Activated CD4-positive, alpha-beta memory T cell treated with anti-CD3 and anti-CD28 coated beads, Interleukin-2, amount 10 ng/mL, durations not matched to agents 7 days and 5 days (primary cell): ENCODE measurements at regions of chr1 and their contacts with region 1.

Region 1: DNA sequence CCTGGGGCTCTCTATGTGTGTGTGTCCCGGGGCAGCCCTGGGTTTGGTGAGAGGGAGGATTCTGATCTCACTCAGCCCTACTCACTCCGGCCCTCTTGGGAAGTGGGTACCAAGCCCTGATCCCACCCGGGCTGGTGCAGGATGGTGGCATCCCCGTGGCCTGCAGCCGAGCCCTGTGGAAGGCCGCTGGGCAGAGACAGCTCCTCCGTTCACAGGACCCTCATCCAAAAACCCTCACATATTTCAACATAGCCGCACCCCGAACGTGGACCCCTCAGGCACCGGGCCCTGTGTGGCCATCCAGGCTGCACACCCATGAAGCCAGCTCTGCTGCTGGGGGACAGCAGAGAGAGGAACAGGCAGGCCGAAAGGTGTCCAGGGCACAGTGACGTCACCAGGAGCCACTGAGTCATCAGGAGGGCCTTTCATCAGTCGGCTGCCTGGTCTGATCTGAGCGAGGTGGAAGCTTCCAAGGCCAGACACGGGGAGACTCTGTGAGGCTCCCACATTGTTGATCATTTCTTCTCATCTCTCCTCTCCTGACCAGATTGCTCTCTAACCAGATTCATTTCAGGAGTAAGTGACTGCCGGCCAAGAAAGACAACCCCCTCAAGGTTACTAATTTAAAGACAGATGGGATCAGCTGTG is 16.2 kb upstream of the GPR157 start:
- DNase-seq: peak; percentile 25
- H3K4me3 Mint-ChIP-seq: no peak overlapping the region
- H3K27ac Mint-ChIP-seq: no peak overlapping the region
- H3K4me1 Mint-ChIP-seq: peaks cover 16% of the 10 kb centered on the region
- H3K27me3 Mint-ChIP-seq: no peaks in the 10 kb centered on the region

Region 2: DNA sequence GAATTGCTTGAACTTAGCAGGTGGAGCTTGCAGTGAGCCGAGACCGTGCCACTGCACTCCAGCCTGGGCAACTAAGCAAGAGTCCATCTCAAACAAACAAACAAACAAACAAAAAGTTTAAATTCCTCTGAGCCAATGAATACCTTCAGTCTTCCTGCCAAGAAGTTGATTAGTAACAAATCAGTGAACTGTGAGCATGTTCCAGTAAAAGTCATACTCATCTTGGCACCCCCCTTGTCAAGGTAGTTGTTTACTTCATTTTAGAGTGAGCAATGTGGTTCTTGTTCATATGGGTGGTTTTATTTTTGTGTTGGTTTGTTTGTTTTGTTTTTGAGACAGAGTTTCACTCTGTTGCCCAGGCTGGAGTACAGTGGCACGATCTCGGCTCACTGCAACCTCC is 100.9 kb before region 1 on chr1:
- CTCF ChIA-PET with region 1: no interaction called
- POLR2A ChIA-PET with region 1: no interaction called
- DNase-seq: no peak
- H3K4me3 Mint-ChIP-seq: no peak overlapping the region
- H3K27ac Mint-ChIP-seq: no peak overlapping the region
- H3K4me1 Mint-ChIP-seq: no peaks in the 10 kb centered on the region
- H3K27me3 Mint-ChIP-seq: peaks cover 19% of the 10 kb centered on the region

Region 3: DNA sequence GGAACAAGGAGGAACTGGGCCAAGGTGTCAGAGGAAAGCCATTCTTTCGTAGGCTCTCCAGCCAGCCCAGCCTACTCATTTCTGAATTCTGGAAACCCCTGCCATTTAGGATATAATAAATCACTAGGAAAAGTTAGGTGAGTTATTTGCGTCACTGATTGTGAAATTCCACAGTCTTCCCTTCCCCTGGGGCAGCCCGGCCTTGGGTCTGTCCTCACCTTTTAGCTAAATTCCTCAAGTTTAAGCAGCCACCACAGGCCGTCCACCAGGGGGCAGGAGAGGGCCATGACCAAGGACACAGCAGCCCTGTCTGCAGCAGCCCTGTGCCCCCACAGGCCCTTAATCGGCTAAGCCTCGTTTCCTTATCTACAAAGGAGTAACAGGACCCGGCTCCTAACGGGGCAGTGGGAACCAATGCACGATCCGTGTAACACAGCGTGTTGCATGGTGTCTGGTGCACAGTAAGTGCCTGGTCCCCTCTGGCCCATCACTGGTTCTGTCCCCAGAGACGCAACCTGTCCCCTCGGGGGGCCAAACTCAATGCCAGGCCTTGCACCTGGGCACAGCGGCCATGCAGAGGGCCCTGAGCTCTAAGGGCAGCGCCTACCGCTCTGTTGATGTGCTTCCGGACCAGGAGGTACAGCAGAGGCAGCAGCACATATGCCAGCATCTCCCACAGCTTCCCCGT is 34.3 kb before region 1 on chr1:
- CTCF ChIA-PET with region 1: interaction called, 16 read pairs
- POLR2A ChIA-PET with region 1: no interaction called
- DNase-seq: peak; percentile 87
- H3K4me3 Mint-ChIP-seq: no peak overlapping the region
- H3K27ac Mint-ChIP-seq: no peak overlapping the region
- H3K4me1 Mint-ChIP-seq: peaks cover 28% of the 10 kb centered on the region
- H3K27me3 Mint-ChIP-seq: no peaks in the 10 kb centered on the region

Region 4: GRCh38 chr1:9128520-9129265 is 16.5 kb before region 1 on chr1 and contains the start of gene GPR157:
- CTCF ChIA-PET with region 1: interaction called, 19 read pairs
- POLR2A ChIA-PET with region 1: no interaction called
- DNase-seq: peak; percentile 87
- H3K4me3 Mint-ChIP-seq: peak within 1 kb of the TSS; percentile 83
- H3K27ac Mint-ChIP-seq: peak within 1 kb of the TSS; percentile 9
- H3K4me1 Mint-ChIP-seq: peaks cover 31% of the 10 kb centered on the region
- H3K27me3 Mint-ChIP-seq: peaks cover 11% of the 10 kb centered on the region
- total RNA-seq, gene GPR157: 3.5 to 5.0 TPM

Region 5: DNA sequence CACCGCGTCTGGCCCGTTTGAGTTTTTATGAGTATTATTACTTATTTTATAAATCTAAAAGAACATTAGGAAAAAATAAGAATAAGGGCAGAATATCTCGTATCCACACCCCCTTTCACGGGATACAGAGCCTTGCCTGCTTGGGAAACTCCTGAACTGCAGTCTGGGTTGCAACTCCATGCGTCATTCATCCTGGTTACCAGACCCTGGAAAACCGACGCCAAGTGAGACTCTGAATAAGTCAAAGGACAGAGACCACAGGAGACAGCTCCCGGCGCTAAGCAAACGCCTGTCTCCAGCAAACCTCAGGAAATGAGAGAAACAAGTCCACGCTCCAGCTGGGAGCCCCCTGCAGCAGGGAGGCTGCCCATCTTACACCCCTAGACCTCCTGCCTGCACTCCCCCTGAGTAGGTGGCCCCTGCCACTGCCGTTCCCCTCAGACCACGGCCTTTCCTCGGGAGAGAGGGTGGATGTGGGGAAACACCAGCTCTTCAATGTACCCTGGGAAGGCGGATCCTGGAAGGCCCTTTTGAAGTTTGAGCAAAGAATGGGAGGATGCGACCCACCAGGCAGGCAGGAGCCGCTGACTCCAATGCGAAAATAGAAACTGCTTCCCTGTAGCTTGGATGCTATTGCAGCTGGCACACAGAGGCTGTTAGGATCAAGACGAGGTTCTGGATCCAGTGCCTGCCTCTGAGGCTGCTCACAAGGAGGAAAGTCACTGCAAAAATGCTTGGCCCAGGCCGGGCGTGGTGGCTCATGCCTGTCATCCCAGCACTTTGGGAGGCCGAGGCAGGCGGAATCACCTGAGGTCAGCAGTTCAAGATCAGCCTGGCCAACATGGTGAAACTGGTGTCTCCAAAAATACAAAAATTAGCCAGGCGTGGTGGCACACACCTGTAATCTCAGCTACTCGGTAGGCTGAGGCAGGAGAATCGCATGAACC is 21.4 kb after region 1 on chr1:
- CTCF ChIA-PET with region 1: interaction called, 11 read pairs
- POLR2A ChIA-PET with region 1: no interaction called
- DNase-seq: no peak
- H3K4me3 Mint-ChIP-seq: no peak overlapping the region
- H3K27ac Mint-ChIP-seq: no peak overlapping the region
- H3K4me1 Mint-ChIP-seq: peaks cover 20% of the 10 kb centered on the region
- H3K27me3 Mint-ChIP-seq: no peaks in the 10 kb centered on the region

Region 6: GRCh38 chr1:9196129-9197040 is 51.2 kb after region 1 on chr1:
- CTCF ChIA-PET with region 1: interaction called, 12 read pairs
- POLR2A ChIA-PET with region 1: no interaction called
- DNase-seq: peak; percentile 64
- H3K4me3 Mint-ChIP-seq: no peak overlapping the region
- H3K27ac Mint-ChIP-seq: no peak overlapping the region
- H3K4me1 Mint-ChIP-seq: peaks cover 26% of the 10 kb centered on the region
- H3K27me3 Mint-ChIP-seq: peaks cover 56% of the 10 kb centered on the region

Region 7: DNA sequence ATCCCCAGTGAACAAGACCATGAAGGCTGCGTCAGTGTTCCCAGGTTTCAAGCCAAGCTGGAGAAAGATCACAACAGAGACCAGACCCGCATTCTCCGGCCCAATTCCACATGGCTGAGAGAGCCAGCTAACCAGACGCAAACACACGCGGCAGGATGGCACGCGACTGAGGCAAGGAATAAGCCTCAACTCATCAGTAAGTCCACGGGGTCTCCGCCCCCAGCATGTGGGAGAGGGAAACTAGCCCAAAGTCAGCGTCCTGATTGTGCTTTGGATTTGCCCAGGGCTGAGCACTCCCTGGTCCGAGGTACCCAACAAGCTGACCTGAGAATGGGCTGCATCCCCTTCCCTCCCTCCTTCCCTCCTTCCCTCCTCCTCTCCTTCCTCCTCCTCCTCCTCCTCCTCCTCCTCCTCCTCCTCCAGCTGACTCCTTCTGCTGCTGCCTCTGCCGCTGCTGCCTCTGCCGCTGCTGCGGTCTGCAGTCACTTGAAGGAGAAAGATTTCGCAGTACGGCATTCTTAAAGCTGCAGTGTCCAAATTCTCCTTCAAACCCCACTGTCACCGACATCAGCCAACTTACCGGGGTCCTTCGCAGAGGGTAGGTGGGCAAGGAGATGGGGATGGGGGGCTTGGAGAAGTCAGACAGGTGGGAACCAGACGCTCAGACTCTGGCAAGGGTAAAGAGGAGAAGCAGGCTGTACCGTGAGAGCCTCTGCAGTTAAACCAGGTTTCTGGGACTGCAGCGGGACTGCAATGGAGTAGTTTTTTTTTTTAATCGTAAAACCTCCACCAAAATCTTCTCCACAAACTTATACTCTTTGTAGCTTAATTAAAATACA is 56.5 kb after region 1 on chr1:
- CTCF ChIA-PET with region 1: interaction called, 12 read pairs
- POLR2A ChIA-PET with region 1: no interaction called
- DNase-seq: no peak
- H3K4me3 Mint-ChIP-seq: peak overlapping the region; percentile 12
- H3K27ac Mint-ChIP-seq: no peak overlapping the region
- H3K4me1 Mint-ChIP-seq: peaks cover 44% of the 10 kb centered on the region
- H3K27me3 Mint-ChIP-seq: peaks cover 84% of the 10 kb centered on the region

Region 8: GRCh38 chr1:9494929-9495758 is 350.0 kb after region 1 on chr1:
- CTCF ChIA-PET with region 1: interaction called, 11 read pairs
- POLR2A ChIA-PET with region 1: no interaction called
- DNase-seq: peak; percentile 69
- H3K4me3 Mint-ChIP-seq: peak overlapping the region; percentile 56
- H3K27ac Mint-ChIP-seq: no peak overlapping the region
- H3K4me1 Mint-ChIP-seq: peaks cover 17% of the 10 kb centered on the region
- H3K27me3 Mint-ChIP-seq: peaks cover 17% of the 10 kb centered on the region